HEK293 (cell line): ENCODE measurements at regions of chr18 and their contacts with region 1.

Region 1: GRCh38 chr18:58781627-58782194 is 83.0 kb upstream of the ZNF532 start:
- H3K4me3 ChIP-seq: no peak overlapping the region
- H3K27ac ChIP-seq: no peak overlapping the region; the same call in 1 of the 2 replicates
- H3K4me1 ChIP-seq: peaks cover 15% of the 10 kb centered on the region
- CTCF ChIP-seq: peak; percentile 100

Region 2: GRCh38 chr18:58893388-58894099 is 111.8 kb after region 1 on chr18:
- CTCF ChIA-PET with region 1: no interaction called
- POLR2A ChIA-PET with region 1: no interaction called
- H3K4me3 ChIP-seq: no peak overlapping the region
- H3K27ac ChIP-seq: no peak overlapping the region
- H3K4me1 ChIP-seq: no peaks in the 10 kb centered on the region
- CTCF ChIP-seq: no peak

Region 3: DNA sequence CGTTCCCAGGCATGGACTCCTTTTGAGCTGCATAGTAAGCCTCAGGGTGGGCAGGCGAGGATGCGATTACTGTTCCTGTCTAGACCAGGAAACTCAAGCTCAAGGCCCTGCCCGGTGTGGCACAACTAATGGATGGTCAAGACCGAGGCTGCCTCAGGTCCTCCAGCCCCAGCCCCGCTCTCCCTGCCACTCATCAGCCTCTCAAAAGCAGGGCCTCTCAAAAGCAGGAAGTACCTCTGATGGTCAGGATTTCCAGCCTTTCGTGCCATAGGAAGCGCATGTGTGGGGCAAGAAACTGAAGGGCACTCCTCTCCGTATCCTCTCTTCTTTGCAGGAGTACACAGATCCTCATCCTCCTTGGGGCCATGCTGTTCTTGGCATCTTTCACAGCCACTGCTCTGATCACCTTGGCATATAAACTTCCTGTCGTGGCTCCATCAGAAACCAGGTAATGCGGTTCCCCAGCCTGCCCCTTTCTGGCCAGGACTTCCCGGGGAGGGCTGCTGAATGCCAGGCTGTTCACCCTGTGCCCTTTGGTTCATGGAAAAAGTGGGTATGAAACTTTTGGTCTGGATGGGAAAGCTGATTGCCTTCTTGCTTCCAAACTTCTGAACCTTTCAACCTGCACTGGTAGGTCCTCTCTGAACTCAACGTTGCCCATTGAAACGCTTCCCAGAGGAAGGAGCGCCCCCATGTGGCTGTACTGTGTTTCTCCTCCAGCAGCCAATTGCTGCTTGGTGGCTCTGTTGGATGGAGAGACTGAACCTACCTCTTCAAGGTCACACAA is 275.2 kb after region 1 on chr18:
- CTCF ChIA-PET with region 1: interaction called, 57 read pairs
- POLR2A ChIA-PET with region 1: no interaction called
- H3K4me3 ChIP-seq: no peak overlapping the region
- H3K27ac ChIP-seq: 0 out of 2 replicates have a peak overlapping the region, but pooled peaks have one; percentile 11
- H3K4me1 ChIP-seq: peaks cover 23% of the 10 kb centered on the region
- CTCF ChIP-seq: peak; percentile 79

Region 4: DNA sequence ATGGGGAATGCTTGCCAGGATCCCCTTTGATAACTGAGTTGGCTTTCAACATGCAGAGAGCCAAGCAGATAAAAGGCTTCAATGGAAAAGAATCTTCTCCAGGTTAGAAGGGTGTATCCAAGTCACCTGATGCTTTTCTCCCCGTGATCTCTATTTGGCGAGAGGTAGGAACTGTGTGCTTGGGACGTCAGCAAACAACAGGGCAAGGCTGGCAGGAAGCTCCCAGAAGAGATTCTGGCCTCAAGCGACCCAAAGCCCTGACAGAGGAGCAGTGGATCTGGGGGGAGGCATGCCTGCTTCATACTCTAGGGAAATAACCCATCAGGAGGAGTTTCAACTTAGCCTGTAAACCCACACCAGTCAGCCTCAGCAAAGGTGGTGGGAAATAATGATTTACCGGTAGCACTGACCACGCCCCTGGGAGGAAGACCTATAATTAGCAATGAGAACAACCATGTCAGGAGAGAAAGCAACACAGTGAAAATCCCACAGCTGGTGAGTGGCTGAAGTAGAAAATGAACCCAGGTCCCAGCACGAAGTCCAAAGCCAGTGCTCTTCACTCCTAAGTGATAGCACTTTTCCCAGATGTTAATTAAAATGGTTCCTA is 281.7 kb after region 1 on chr18:
- CTCF ChIA-PET with region 1: interaction called, 206 read pairs
- POLR2A ChIA-PET with region 1: no interaction called
- H3K4me3 ChIP-seq: no peak overlapping the region
- H3K27ac ChIP-seq: no peak overlapping the region
- H3K4me1 ChIP-seq: peaks cover 12% of the 10 kb centered on the region
- CTCF ChIP-seq: no peak

Region 5: GRCh38 chr18:59070181-59070912 is 288.6 kb after region 1 on chr18:
- CTCF ChIA-PET with region 1: interaction called, 206 read pairs
- POLR2A ChIA-PET with region 1: interaction called, 3 read pairs
- H3K4me3 ChIP-seq: no peak overlapping the region
- H3K27ac ChIP-seq: no peak overlapping the region
- H3K4me1 ChIP-seq: peaks cover 9% of the 10 kb centered on the region
- CTCF ChIP-seq: peak; percentile 91

Region 6: GRCh38 chr18:59079264-59079972 is 297.7 kb after region 1 on chr18:
- CTCF ChIA-PET with region 1: interaction called, 12 read pairs
- POLR2A ChIA-PET with region 1: no interaction called
- H3K4me3 ChIP-seq: no peak overlapping the region
- H3K27ac ChIP-seq: no peak overlapping the region
- H3K4me1 ChIP-seq: peaks cover 16% of the 10 kb centered on the region
- CTCF ChIP-seq: no peak